Activated T-helper 2 cell treated with anti-CD3 and anti-CD28 coated beads, Interferon-gamma antibody, Interleukin-2, Interleukin-4, amounts not matched to agents 10 μg/mL and 5 μg/mL and 100 μg/mL, durations not matched to agents 14 hours and 24 hours and 36 hours (primary cell): ENCODE measurements at regions of chr18 and their contacts with region 1.

Region 1: DNA sequence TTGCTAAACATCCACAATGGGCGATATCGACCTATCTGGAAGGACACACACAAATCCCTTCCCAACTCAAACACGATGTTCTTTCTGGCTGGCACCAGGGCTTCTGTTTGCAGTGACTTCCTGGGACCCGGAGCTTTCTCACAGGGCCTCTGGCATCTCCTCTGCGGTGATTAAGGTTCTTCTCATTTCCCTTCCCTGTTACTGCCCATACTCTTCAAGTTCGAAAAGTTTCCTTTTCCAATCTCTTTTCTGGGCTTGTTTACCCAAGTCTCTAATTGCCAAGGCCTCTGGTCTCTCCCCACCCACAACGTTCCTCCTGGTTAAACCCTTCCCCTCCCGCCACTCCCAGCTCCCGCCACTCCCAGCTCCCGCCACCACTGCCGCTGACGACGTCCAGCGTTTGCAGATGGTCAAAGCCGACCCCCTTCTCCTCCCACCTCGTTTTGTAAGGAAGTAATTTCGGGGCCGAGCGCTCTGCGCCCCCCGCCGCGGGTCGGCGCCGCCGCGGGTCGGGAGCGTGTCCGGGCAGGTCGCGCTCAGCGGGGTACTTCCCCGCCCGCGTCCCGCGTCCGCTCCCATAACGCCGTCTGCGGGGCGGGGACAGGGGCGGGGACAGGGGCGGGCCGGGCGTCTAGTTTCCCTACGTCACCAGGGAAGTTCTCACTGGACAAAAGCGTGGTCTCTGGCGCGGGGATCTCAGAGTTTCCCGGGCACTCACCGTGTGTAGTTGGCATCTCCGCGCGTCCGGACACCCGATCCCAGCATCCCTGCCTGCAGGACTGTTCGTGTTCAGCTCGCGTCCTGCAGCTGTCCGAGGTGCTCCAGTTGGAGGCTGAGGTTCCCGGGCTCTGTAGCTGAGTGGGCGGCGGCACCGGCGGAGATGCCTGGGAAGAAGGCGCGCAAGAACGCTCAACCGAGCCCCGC is at the start of gene PMAIP1:
- DNase-seq: peak; percentile 84
- H3K4me3 Mint-ChIP-seq: peak within 1 kb of the TSS; percentile 96
- H3K27ac Mint-ChIP-seq: peak within 1 kb of the TSS; percentile 96
- H3K4me1 Mint-ChIP-seq: peaks cover 40% of the 10 kb centered on the region
- H3K27me3 Mint-ChIP-seq: no peaks in the 10 kb centered on the region
- total RNA-seq, gene PMAIP1: 41.8 and 42.0 TPM in 2 replicates

Region 2: GRCh38 chr18:59139371-59140298 is 759.9 kb before region 1 on chr18 and contains the start of gene SEC11C:
- intact Hi-C with region 1: loop called (anchors 5 kb)
- DNase-seq: peak; percentile 95
- H3K4me3 Mint-ChIP-seq: peak within 1 kb of the TSS; percentile 93
- H3K27ac Mint-ChIP-seq: peak within 1 kb of the TSS; percentile 97
- H3K4me1 Mint-ChIP-seq: peaks cover 41% of the 10 kb centered on the region
- H3K27me3 Mint-ChIP-seq: peaks cover 18% of the 10 kb centered on the region
- total RNA-seq, gene SEC11C: 198 and 208 TPM in 2 replicates

Region 3: GRCh38 chr18:59606193-59607077 is 293.1 kb before region 1 on chr18:
- intact Hi-C with region 1: no loop called
- DNase-seq: no peak
- H3K4me3 Mint-ChIP-seq: no peak overlapping the region
- H3K27ac Mint-ChIP-seq: no peak overlapping the region
- H3K4me1 Mint-ChIP-seq: no peaks in the 10 kb centered on the region
- H3K27me3 Mint-ChIP-seq: no peaks in the 10 kb centered on the region

Region 4: DNA sequence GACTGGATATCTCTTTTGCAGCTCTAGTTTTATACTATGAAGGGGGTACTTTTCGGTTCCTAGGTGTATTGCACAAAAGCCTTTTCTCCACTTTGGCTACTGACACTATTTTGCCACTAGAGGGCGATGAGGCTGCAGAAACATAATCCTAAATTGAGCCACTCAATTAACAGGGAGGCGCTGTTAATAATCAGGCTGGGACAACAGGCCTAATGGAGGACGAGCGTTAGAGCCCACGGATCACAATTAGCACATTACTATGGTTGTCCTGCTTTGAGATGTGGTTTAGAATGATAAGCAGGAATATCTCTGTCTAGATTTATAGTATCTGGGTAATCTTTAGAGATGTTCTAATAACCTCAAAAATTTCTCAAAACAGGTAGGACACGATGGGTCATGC is 62.0 kb before region 1 on chr18:
- intact Hi-C with region 1: loop called (anchors 2 kb)
- DNase-seq: peak; percentile 25
- H3K4me3 Mint-ChIP-seq: no peak overlapping the region
- H3K27ac Mint-ChIP-seq: no peak overlapping the region
- H3K4me1 Mint-ChIP-seq: peaks cover 7% of the 10 kb centered on the region
- H3K27me3 Mint-ChIP-seq: peaks cover 16% of the 10 kb centered on the region

Region 5: GRCh38 chr18:59910967-59911366 is 11.4 kb after region 1 on chr18:
- intact Hi-C with region 1: no loop called
- DNase-seq: no peak
- H3K4me3 Mint-ChIP-seq: no peak overlapping the region
- H3K27ac Mint-ChIP-seq: no peak overlapping the region
- H3K4me1 Mint-ChIP-seq: peaks cover 40% of the 10 kb centered on the region
- H3K27me3 Mint-ChIP-seq: no peaks in the 10 kb centered on the region

Region 6: DNA sequence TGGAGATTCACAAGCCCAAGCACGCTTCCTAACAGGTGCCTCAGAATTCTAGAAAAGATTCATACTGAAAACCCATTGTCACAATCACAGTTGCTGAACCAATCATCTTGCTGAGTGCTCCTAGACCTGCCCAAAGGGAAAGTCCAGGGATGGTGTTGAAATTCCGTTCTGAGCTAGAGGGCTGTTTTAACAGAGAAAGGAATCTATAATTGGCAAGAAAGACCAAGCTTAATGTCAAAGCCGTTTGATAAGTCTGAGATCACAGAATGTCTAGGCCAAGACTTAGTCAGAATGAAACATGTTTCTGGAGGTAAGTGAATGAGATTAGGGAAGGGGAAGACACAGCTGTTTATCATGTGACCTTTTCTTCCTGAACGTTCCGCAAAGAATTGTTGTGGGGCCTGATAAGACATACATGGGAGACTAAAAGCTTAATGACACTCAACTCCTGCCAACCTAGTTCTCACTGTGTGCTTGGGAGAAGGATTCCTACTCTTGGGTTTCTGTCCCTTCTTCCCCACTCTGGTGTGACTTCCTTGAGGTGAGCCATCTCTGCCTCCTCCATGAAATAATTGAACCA is 27.8 kb after region 1 on chr18:
- intact Hi-C with region 1: loop called (anchors 1 kb)
- DNase-seq: no peak
- H3K4me3 Mint-ChIP-seq: peak overlapping the region; percentile 34
- H3K27ac Mint-ChIP-seq: peak overlapping the region; percentile 87
- H3K4me1 Mint-ChIP-seq: peaks cover 52% of the 10 kb centered on the region
- H3K27me3 Mint-ChIP-seq: no peaks in the 10 kb centered on the region